ENCODE measurements at regions of chr12 and their contacts with region 1.

Region 1: DNA sequence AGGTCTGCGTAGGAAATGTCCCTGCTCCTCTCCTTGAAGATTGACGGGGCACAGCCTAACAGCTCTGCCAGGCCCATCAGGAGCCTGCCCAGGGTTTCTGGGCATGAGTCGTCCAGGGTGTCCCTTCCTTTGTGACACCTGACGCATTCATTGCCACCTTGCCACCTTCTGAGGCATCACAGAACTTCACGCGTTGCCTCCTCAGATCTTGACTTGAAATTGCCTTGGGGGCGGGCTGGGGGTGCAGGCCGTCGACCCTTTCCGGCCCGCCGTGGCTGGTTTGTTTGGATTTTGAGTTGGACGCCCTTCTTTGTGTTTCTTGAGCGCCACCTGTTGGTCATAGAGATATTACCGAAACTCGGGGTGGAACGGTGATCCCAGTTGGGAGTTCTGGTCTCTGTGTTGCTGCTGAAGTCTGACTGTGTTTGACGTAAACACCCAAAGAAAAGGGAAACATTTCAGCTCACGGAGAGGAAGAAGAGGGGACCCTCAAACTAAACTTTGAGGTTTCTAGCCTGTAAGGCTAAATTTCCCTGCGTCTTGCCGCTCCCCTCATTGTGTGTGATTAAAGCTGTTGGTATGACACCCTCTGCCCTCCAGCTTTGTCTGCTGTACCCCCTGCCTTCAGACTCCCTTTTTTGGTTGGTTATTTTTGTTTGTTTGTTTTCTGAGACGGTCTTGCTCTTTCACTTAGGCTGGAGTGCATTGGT is 44.6 kb downstream of the MLXIP start:
- DNase-seq: peak in 2 of 3 donors; percentile 75 to 91
- ATAC-seq: peak; percentile 71
- H3K4me3 ChIP-seq: no peak overlapping the region
- H3K4me1 ChIP-seq: peaks cover 60% of the 10 kb centered on the region
- CTCF ChIP-seq: no peak

Region 2: GRCh38 chr12:121925358-121925695 is 197.9 kb before region 1 on chr12:
- intact Hi-C with region 1: no loop called
- DNase-seq: no peak
- ATAC-seq: no peak
- H3K4me3 ChIP-seq: no peak overlapping the region
- H3K4me1 ChIP-seq: no peaks in the 10 kb centered on the region
- CTCF ChIP-seq: no peak

Region 3: DNA sequence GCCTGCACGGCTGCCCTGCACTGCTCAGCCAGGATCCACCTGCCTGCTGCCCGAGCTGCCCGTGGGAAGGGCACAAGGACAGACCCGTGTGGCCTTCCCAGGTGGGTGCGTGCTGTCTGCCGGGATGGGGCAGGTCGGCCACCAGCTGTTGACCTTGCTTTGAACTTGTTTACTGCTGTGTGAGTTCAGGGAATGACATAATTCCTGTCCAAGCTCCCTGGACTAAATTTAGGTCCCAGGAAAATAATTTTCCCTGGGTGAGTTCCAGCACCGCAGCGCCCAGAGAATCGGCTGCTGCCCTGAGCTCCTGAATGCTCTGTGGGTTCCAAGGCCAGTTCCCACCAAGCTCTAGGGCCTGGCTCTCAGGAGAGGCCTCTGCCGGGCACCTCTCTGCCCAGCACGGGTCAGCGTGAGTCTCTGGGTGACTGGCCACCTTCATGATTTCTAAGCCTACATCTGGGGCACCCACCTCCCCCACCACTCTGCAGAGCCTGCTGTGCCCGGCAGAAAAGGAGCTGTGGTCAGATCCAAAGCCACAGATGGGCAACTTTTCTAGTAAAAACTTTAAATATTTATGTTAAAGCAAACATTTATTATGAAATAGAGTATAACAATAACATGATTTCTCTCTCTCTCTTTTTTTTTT is 71.9 kb before region 1 on chr12:
- intact Hi-C with region 1: loop called (anchors 5 kb)
- DNase-seq: no peak
- ATAC-seq: no peak
- H3K4me3 ChIP-seq: no peak overlapping the region
- H3K4me1 ChIP-seq: peaks cover 10% of the 10 kb centered on the region
- CTCF ChIP-seq: no peak

Region 4: GRCh38 chr12:122081697-122082221 is 41.4 kb before region 1 on chr12:
- intact Hi-C with region 1: loop called in 1 of 2 experiments (anchors 2 kb)
- DNase-seq: peak; percentile 58 to 64 (median 63)
- ATAC-seq: peak; percentile 22
- H3K4me3 ChIP-seq: peak overlapping the region; percentile 4
- H3K4me1 ChIP-seq: peaks cover 47% of the 10 kb centered on the region
- CTCF ChIP-seq: no peak